ENCODE measurements at regions of chr5 and their contacts with region 1.

Region 1: DNA sequence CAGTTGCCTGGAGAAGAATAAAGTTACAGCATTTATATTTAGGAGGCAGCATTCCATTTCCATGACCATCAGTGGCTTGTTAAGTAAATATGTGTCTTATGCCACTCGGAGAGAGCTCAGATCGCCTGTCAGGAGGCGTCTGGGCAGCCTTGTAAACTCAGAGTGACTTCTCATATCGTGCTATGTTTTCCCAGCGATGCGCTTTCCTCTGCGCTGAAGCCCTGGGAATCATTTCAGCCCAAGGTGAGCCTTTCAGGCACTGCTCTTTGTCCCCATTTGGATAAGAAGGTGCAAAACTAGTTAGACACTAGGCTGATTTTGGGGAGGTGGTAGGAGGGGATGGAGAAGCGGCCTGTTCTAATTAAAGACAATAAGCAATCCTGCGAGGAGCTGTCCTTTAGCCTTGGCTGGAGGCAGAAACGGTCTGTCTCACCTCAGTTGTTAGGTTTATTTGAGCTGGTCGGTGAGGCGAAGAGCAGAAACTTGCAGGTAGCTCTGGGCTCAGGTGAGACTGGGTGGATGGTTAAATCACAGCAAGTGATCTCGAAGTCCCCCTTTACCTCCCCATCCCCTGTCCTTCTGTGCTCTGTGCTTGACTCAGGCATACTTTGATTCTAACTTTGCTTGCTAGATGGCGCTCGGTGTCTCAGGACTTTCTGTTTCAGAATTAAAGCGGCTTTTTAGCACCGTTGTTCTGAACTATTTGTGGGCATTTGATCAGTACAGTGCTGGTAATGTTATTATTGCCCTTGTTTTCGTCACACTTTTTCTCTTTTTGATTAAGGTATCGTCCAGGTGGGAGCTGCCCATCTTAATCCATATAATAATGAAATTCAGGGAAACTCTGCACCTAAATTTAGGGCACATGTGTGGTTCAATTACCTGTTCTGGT is 24.6 kb downstream of the NR2F1 start:
- DNase-seq: no peak
- H3K4me3 ChIP-seq: peak overlapping the region in 1 of 2 donors; percentile 17
- H3K27ac ChIP-seq: no peak overlapping the region
- H3K4me1 ChIP-seq: peaks cover 2 to 5% of the 10 kb centered on the region in 2 donors
- H3K27me3 ChIP-seq: peaks cover 45% of the 10 kb centered on the region
- CTCF ChIP-seq: peak in 2 of 3 experiments; percentile 24 to 65

Region 2: GRCh38 chr5:93305984-93306383 is 301.6 kb before region 1 on chr5:
- intact Hi-C with region 1: no loop called
- DNase-seq: no peak
- H3K4me3 ChIP-seq: no peak overlapping the region
- H3K27ac ChIP-seq: no peak overlapping the region
- H3K4me1 ChIP-seq: no peaks in the 10 kb centered on the region
- H3K27me3 ChIP-seq: no peaks in the 10 kb centered on the region
- CTCF ChIP-seq: no peak

Region 3: DNA sequence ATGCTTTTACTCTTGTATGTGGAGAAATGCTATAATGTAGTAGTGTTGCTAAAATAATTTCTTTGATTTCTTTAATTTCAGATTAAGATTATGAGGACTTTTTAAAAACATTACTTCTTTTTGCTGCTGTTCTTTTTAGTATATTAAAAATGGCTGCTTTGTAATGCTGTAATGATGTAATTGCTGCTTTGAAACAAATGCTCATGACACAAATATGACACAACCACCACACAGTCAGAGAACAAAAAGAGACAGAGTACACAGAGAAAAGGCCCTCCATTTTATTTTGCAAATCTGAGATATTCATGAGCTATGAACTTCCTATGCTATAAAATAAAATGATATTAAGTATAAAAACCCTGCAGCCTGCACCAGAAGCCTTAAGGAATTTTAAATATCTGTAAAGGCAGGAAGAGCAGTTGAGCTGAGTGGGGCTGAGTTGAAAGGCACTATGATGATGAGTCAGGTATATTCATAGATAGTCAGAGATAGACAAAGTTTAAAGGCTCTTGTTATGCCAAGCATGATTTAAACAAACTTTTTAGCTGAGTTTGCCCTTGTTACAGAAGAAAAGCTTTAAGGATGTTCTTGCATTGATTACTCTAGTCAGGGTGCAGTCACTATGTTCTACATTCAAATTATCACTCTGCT is 138.9 kb after region 1 on chr5:
- intact Hi-C with region 1: no loop called
- DNase-seq: no peak
- H3K4me3 ChIP-seq: no peak overlapping the region
- H3K27ac ChIP-seq: no peak overlapping the region
- H3K4me1 ChIP-seq: no peaks in the 10 kb centered on the region
- H3K27me3 ChIP-seq: no peaks in the 10 kb centered on the region
- CTCF ChIP-seq: no peak

Region 4: GRCh38 chr5:94111209-94112004 is 503.8 kb after region 1 on chr5:
- intact Hi-C with region 1: loop called (anchors 5 kb)
- DNase-seq: peak; percentile 83 to 98
- H3K4me3 ChIP-seq: peak overlapping the region; percentile 75 to 77
- H3K27ac ChIP-seq: peak overlapping the region; percentile 87 to 93
- H3K4me1 ChIP-seq: no peaks in the 10 kb centered on the region
- H3K27me3 ChIP-seq: no peaks in the 10 kb centered on the region
- CTCF ChIP-seq: peak in 1 of 3 experiments; percentile 38

Measured in ascending aorta (tissue), 2 donors.